Naive thymus-derived CD4-positive, alpha-beta T cell (primary cell): ENCODE measurements at regions of chr14 and their contacts with region 1.

Region 1: DNA sequence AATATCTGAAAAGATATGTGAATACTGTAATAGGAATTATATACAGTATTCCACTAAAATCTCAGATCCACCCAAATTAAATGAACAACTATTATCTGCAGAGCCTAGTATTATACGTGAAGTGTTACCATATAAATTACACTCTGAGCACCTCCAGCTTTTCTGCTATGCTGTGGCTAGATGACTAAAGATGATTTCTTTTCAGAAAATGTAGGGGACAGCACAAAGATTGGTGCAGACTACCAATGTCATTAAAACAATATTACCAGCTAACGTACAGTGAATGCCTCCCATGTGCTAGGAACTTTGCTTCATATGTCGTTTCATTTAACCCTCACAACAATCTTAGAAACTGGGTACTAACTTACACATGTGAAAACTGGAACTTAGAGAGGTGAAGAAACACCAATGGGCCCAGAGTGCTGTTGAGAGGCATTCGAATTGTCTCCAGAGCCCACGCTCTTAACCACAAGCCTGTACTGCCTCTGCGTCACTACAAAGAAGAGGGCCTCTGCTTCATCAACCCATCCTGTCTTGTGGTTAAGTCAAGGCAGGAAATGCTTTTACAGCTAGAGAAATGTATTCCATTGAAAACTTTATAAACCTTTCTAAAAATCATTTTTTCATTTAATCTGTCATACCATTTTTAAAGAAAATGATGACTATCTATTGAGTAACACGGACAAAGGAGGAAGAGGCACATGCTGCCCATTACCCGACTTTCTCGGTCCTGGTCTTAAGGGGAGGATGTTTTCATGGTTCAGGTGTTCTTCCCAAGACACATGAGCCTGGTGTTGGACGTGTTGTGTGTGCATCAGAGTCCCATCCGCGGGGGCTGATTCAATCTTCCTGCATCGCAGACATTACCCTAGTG is 1.3 kb downstream of the GPR65 start:
- DNase-seq: peak in 8 of 9 donors; percentile 55 to 90 (median 84)
- ATAC-seq: peak; percentile 94
- H3K4me3 ChIP-seq: peak overlapping the region; percentile 66
- H3K4me3 Mint-ChIP-seq: peak overlapping the region; percentile 80 to 96 (median 90)
- H3K27ac ChIP-seq: peak overlapping the region; percentile 81
- H3K27ac Mint-ChIP-seq: peak overlapping the region; percentile 89 to 98 (median 96)
- H3K4me1 ChIP-seq: peaks cover 24 to 32% of the 10 kb centered on the region in 2 donors
- H3K4me1 Mint-ChIP-seq: peaks cover 55 to 82% (median 72%) of the 10 kb centered on the region in 7 donors
- H3K27me3 ChIP-seq: no peaks in the 10 kb centered on the region
- H3K27me3 Mint-ChIP-seq: no peaks in the 10 kb centered on the region

Region 2: GRCh38 chr14:87952307-87953094 is 53.7 kb before region 1 on chr14:
- CTCF ChIA-PET with region 1: no interaction called
- POLR2A ChIA-PET with region 1: interaction called, 6 read pairs
- intact Hi-C with region 1: loop called (anchors 1 to 5 kb)
- DNase-seq: peak in 5 of 9 donors; percentile 12 to 20 (median 14)
- ATAC-seq: peak; percentile 71
- H3K4me3 ChIP-seq: no peak overlapping the region
- H3K4me3 Mint-ChIP-seq: peak overlapping the region; percentile 3 to 85 (median 70)
- H3K27ac ChIP-seq: peak overlapping the region; percentile 56
- H3K27ac Mint-ChIP-seq: peak overlapping the region; percentile 78 to 94 (median 91)
- H3K4me1 ChIP-seq: peaks cover 20 to 21% of the 10 kb centered on the region in 2 donors
- H3K4me1 Mint-ChIP-seq: peaks cover 27 to 62% (median 40%) of the 10 kb centered on the region in 7 donors
- H3K27me3 ChIP-seq: no peaks in the 10 kb centered on the region
- H3K27me3 Mint-ChIP-seq: no peaks in the 10 kb centered on the region

Region 3: GRCh38 chr14:88023658-88024187 is 17.5 kb after region 1 on chr14:
- CTCF ChIA-PET with region 1: no interaction called
- POLR2A ChIA-PET with region 1: interaction called, 24 read pairs
- intact Hi-C with region 1: loop called (anchors 1 kb)
- DNase-seq: peak in 4 of 9 donors; percentile 2 to 25 (median 17)
- ATAC-seq: peak; percentile 69
- H3K4me3 ChIP-seq: no peak overlapping the region
- H3K4me3 Mint-ChIP-seq: peak overlapping the region in 6 of 10 donors; percentile 6 to 41 (median 18)
- H3K27ac ChIP-seq: no peak overlapping the region
- H3K27ac Mint-ChIP-seq: peak overlapping the region; percentile 24 to 89 (median 69)
- H3K4me1 ChIP-seq: peaks cover 38 to 43% of the 10 kb centered on the region in 2 donors
- H3K4me1 Mint-ChIP-seq: peaks cover 49 to 84% (median 73%) of the 10 kb centered on the region in 7 donors
- H3K27me3 ChIP-seq: no peaks in the 10 kb centered on the region
- H3K27me3 Mint-ChIP-seq: no peaks in the 10 kb centered on the region

Region 4: GRCh38 chr14:88385345-88386101 is 379.3 kb after region 1 on chr14 and contains the start of gene SPATA7:
- CTCF ChIA-PET with region 1: no interaction called
- POLR2A ChIA-PET with region 1: interaction called, 4 read pairs
- intact Hi-C with region 1: loop called (anchors 2 to 5 kb)
- DNase-seq: peak; percentile 45 to 79 (median 62)
- ATAC-seq: peak; percentile 95
- H3K4me3 ChIP-seq: peak within 1 kb of the TSS; percentile 85
- H3K4me3 Mint-ChIP-seq: peak within 1 kb of the TSS; percentile 93 to 97 (median 94)
- H3K27ac ChIP-seq: peak within 1 kb of the TSS; percentile 75
- H3K27ac Mint-ChIP-seq: peak within 1 kb of the TSS; percentile 68 to 88 (median 83)
- H3K4me1 ChIP-seq: peaks cover 7 to 9% of the 10 kb centered on the region in 2 donors
- H3K4me1 Mint-ChIP-seq: peaks cover 6 to 29% (median 20%) of the 10 kb centered on the region in 7 donors
- H3K27me3 ChIP-seq: no peaks in the 10 kb centered on the region
- H3K27me3 Mint-ChIP-seq: peaks cover 0 to 23% (median 0%) of the 10 kb centered on the region in 5 donors
- total RNA-seq, gene SPATA7: 1.9 to 4.3 (median 2.5) TPM

Region 5: GRCh38 chr14:88792572-88793258 is 786.5 kb after region 1 on chr14 and contains the start of gene EML5:
- CTCF ChIA-PET with region 1: no interaction called
- POLR2A ChIA-PET with region 1: no interaction called
- intact Hi-C with region 1: loop called in 1 of 2 experiments (anchors 5 kb)
- DNase-seq: peak; percentile 78 to 89 (median 86)
- ATAC-seq: peak; percentile 93
- H3K4me3 ChIP-seq: peak within 1 kb of the TSS; percentile 87
- H3K4me3 Mint-ChIP-seq: peak within 1 kb of the TSS; percentile 83 to 93 (median 91)
- H3K27ac ChIP-seq: peak within 1 kb of the TSS; percentile 78
- H3K27ac Mint-ChIP-seq: peak within 1 kb of the TSS; percentile 42 to 94 (median 77)
- H3K4me1 ChIP-seq: peaks cover 7 to 10% of the 10 kb centered on the region in 2 donors
- H3K4me1 Mint-ChIP-seq: peaks cover 8 to 29% (median 19%) of the 10 kb centered on the region in 7 donors
- H3K27me3 ChIP-seq: no peaks in the 10 kb centered on the region
- H3K27me3 Mint-ChIP-seq: peaks cover 0 to 36% (median 0%) of the 10 kb centered on the region in 5 donors
- total RNA-seq, gene EML5: 1.3 to 6.4 (median 5.4) TPM